Mammary epithelial cell (primary cell): ENCODE measurements at regions of chr2 and their contacts with region 1.

Region 1: GRCh38 chr2:241386519-241386918 is 30.4 kb downstream of the FARP2 start:
- DNase-seq: no peak
- H3K4me3 ChIP-seq: no peak overlapping the region
- H3K27ac ChIP-seq: no peak overlapping the region
- H3K4me1 ChIP-seq: peaks cover 19% of the 10 kb centered on the region
- H3K27me3 ChIP-seq: no peaks in the 10 kb centered on the region
- CTCF ChIP-seq: no peak

Region 2: GRCh38 chr2:241324775-241325174 is 61.7 kb before region 1 on chr2:
- CTCF ChIA-PET with region 1: no interaction called
- dilution Hi-C with region 1: loop called (anchors 5 kb)
- in situ Hi-C with region 1: no loop called
- intact Hi-C with region 1: no loop called
- DNase-seq: no peak
- H3K4me3 ChIP-seq: no peak overlapping the region
- H3K27ac ChIP-seq: no peak overlapping the region
- H3K4me1 ChIP-seq: peaks cover 14% of the 10 kb centered on the region
- H3K27me3 ChIP-seq: no peaks in the 10 kb centered on the region
- CTCF ChIP-seq: no peak

Region 3: GRCh38 chr2:241372361-241372992 is 14.0 kb before region 1 on chr2:
- CTCF ChIA-PET with region 1: no interaction called
- dilution Hi-C with region 1: no loop called
- in situ Hi-C with region 1: no loop called
- intact Hi-C with region 1: no loop called
- DNase-seq: no peak
- H3K4me3 ChIP-seq: no peak overlapping the region
- H3K27ac ChIP-seq: no peak overlapping the region
- H3K4me1 ChIP-seq: no peaks in the 10 kb centered on the region
- H3K27me3 ChIP-seq: no peaks in the 10 kb centered on the region
- CTCF ChIP-seq: no peak